ENCODE measurements at regions of chr1 and their contacts with region 1.

Region 1: GRCh38 chr1:147515046-147515869 is 26.0 kb upstream of the BCL9 start:
- ATAC-seq: peak in 5 of 8 experiments; percentile 37 to 85 (median 84)
- H3K4me3 ChIP-seq: no peak overlapping the region
- H3K27ac ChIP-seq: no peak overlapping the region
- H3K4me1 ChIP-seq: peaks cover 0 to 4% of the 10 kb centered on the region in 2 donors

Region 2: DNA sequence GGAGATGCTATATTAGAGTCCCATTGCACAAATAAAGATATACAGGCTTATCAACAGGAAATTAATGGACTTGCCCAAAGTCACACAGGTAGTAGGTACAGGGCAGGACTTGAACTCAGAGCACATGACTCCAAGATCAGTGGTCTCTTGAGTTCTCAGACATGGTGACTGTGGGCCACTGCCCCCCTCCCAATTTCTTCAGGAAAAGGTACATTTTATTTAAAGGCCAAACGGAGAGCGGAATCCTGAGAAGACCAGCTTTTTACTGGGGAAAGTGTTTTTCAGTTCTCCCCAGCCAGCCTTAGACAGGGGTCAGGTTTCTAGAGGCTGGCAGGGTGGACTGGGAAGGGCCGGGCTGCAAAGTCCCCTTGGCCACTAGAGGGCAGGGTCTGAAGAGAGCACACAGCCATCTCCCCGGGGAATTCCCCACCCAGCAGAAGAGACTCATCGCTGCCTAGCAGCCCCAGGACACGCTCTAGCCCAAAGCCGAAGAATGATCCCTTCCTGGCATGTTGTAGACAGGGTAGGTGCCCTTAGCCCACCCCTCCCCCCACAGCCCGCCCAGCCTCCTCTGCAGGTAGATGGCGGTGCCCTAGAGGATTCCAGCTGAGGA is 125.4 kb after region 1 on chr1:
- in situ Hi-C with region 1: loop called in 1 of 9 experiments (anchors 25 kb)
- ATAC-seq: peak; percentile 72 to 99 (median 87)
- H3K4me3 ChIP-seq: no peak overlapping the region
- H3K27ac ChIP-seq: no peak overlapping the region
- H3K4me1 ChIP-seq: no peaks in the 10 kb centered on the region